SK-N-SH (cell line): ENCODE measurements at regions of chr3 and their contacts with region 1.

Region 1: GRCh38 chr3:124916837-124917409 is 17.6 kb downstream of the MUC13 start:
- DNase-seq: peak; percentile 51
- H3K4me3 ChIP-seq: no peak overlapping the region
- H3K27ac ChIP-seq: peak overlapping the region in 1 of 2 experiments; percentile 56; a peak in 2 of 4 replicates
- H3K4me1 ChIP-seq: peaks cover 0 to 37% of the 10 kb centered on the region in 2 experiments; a peak in 1 of 4 replicates
- H3K27me3 ChIP-seq: no peaks in the 10 kb centered on the region
- CTCF ChIP-seq: no peak
- EP300 ChIP-seq: peak in 1 of 2 experiments; percentile 50; a peak in 1 of 4 replicates
- RAD21 ChIP-seq: no peak

Region 2: DNA sequence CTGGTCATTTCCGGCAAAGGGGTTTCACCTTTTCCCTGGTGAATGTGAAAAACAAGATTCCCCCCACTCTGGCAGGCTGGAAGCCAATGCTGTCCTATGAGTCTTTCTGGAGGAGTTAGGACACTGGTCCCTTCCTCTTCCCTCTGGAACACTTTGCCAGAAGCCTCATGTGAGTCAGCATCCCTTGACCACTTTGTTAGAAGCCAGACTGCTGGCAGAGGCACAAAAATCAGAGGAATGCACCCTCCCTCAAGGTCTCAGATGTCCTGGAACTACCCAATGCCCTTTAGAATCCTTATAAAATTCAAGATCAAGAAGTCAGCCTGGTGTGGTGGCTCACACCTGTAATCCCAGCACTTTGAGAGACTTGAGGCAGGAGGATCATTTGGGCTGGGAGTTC is 56.3 kb before region 1 on chr3:
- CTCF ChIA-PET with region 1: no interaction called
- POLR2A ChIA-PET with region 1: no interaction called
- DNase-seq: no peak
- H3K4me3 ChIP-seq: no peak overlapping the region
- H3K27ac ChIP-seq: peak overlapping the region; percentile 71 to 92
- H3K4me1 ChIP-seq: peaks cover 20 to 23% of the 10 kb centered on the region in 2 experiments; a peak in 3 of 4 replicates
- H3K27me3 ChIP-seq: no peaks in the 10 kb centered on the region
- CTCF ChIP-seq: no peak
- EP300 ChIP-seq: peak; percentile 70 to 98
- RAD21 ChIP-seq: no peak

Region 3: GRCh38 chr3:124928333-124929202 is 11.6 kb after region 1 on chr3:
- CTCF ChIA-PET with region 1: interaction called, 13 read pairs
- POLR2A ChIA-PET with region 1: no interaction called
- DNase-seq: peak; percentile 39
- H3K4me3 ChIP-seq: peak overlapping the region in 1 of 2 experiments; percentile 48; a peak in 1 of 4 replicates
- H3K27ac ChIP-seq: no peak overlapping the region
- H3K4me1 ChIP-seq: no peaks in the 10 kb centered on the region; a peak in 1 of 4 replicates
- H3K27me3 ChIP-seq: no peaks in the 10 kb centered on the region
- CTCF ChIP-seq: peak; percentile 90
- EP300 ChIP-seq: no peak
- RAD21 ChIP-seq: peak; percentile 80

Region 4: DNA sequence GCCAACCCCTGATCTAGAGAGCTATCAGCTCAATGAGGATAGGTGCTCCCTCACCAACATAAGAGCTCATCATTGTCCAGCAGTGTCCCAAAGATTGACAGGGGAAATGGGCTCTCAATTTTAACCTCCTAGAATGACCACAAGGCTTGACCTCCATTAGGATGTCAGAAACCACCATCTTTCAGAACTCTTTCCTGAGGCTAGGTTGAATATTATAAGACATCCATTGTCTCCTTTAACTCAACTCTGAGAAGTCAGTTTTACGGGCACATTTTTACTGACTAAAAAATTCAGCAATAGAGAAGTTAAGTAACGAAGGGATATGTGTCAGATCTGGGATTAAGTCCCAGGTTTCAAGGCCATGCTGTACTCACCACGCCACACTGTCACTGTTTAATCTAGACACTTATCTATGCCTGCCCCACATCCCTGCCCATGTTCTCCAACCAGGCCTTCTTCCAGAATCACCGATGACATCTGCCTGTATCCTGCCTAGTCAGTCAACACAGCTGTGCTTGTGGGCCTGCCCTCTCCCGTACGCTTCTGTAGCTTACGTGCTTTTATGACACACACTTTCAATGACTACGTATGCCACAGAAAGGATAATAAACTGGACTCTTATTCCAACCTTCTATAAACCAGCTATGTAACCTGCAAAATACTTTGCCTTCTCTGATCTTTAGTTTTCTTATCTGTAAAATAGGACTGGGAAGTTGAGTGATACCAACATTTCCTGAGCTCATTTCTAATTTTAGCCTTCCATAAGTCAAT is 34.8 kb after region 1 on chr3:
- CTCF ChIA-PET with region 1: no interaction called
- POLR2A ChIA-PET with region 1: no interaction called
- DNase-seq: no peak
- H3K4me3 ChIP-seq: no peak overlapping the region
- H3K27ac ChIP-seq: no peak overlapping the region
- H3K4me1 ChIP-seq: no peaks in the 10 kb centered on the region
- H3K27me3 ChIP-seq: no peaks in the 10 kb centered on the region
- CTCF ChIP-seq: no peak
- EP300 ChIP-seq: no peak
- RAD21 ChIP-seq: no peak

Region 5: DNA sequence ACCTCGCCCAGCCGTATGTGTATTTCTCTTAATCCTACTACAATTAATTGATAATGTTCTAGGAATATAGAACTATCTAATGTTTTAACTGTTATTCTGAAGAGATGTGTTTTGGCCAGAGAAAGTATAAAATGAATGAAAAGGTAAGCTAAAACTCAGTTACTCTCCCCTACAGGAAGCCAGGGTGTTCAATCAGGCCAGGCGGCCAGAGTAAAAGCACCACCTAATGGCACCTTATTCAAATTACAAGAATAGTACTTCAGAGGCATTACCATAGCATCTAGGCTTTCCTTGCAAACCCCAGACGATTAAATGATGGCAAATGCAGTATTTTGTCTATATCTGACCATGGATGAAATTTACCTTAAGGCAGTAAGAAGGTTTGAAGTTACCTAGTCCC is 285.3 kb after region 1 on chr3:
- CTCF ChIA-PET with region 1: no interaction called
- POLR2A ChIA-PET with region 1: no interaction called
- DNase-seq: no peak
- H3K4me3 ChIP-seq: no peak overlapping the region
- H3K27ac ChIP-seq: no peak overlapping the region
- H3K4me1 ChIP-seq: no peaks in the 10 kb centered on the region
- H3K27me3 ChIP-seq: no peaks in the 10 kb centered on the region
- CTCF ChIP-seq: peak; percentile 26; the same call in 1 of the 2 replicates
- EP300 ChIP-seq: no peak
- RAD21 ChIP-seq: peak; percentile 38; the same call in 1 of the 2 replicates